Ascending aorta (tissue), 2 donors: ENCODE measurements at regions of chr5 and their contacts with region 1.

Region 1: GRCh38 chr5:142881076-142881783 is 111.1 kb downstream of the ARHGAP26 start:
- DNase-seq: peak in 1 of 2 donors; percentile 74
- H3K4me3 ChIP-seq: no peak overlapping the region
- H3K27ac ChIP-seq: peak overlapping the region in 1 of 2 donors; percentile 9
- H3K4me1 ChIP-seq: peaks cover 0 to 22% of the 10 kb centered on the region in 2 donors
- H3K27me3 ChIP-seq: no peaks in the 10 kb centered on the region
- CTCF ChIP-seq: no peak

Region 2: DNA sequence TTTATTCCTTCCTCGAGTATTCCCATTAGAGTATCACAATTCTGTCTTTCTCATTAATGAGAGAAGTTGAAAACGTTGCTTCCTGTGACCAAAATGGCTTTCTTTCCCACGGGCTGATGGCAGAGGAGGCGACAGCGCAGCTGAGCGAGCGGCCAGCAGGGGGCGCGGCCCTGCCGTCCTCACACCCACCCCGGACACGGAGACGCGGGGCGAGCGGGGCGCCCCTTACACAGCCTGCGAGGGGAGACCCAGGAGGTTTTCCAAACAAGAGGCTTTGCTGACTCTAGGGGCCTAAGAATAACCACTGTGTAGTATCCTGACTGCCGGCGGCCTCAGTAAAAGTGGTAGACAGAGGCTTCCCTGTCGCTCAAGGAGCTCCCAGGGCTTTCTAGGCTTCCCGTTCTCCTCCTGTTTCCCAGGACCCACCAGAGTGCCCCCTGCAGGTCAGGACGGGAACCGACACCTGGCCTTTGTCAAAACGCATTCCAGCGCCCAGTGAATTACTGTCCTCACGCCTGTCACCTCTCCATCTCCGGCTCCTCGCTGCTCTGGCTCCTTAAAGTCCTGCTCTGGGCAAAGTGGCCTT is 168.0 kb before region 1 on chr5:
- intact Hi-C with region 1: loop called (anchors 1 kb)
- DNase-seq: peak; percentile 49 to 93
- H3K4me3 ChIP-seq: peak overlapping the region; percentile 52 to 65
- H3K27ac ChIP-seq: peak overlapping the region; percentile 82 to 84
- H3K4me1 ChIP-seq: peaks cover 0 to 5% of the 10 kb centered on the region in 2 donors
- H3K27me3 ChIP-seq: no peaks in the 10 kb centered on the region
- CTCF ChIP-seq: peak; percentile 92 to 95 (median 94)